Activated CD4-positive, alpha-beta T cell treated with anti-CD3 and anti-CD28 coated beads, Interleukin-2, amount 10 ng/mL, durations not matched to agents 24 days and 14 days (primary cell): ENCODE measurements at regions of chr12 and their contacts with region 1.

Region 1: DNA sequence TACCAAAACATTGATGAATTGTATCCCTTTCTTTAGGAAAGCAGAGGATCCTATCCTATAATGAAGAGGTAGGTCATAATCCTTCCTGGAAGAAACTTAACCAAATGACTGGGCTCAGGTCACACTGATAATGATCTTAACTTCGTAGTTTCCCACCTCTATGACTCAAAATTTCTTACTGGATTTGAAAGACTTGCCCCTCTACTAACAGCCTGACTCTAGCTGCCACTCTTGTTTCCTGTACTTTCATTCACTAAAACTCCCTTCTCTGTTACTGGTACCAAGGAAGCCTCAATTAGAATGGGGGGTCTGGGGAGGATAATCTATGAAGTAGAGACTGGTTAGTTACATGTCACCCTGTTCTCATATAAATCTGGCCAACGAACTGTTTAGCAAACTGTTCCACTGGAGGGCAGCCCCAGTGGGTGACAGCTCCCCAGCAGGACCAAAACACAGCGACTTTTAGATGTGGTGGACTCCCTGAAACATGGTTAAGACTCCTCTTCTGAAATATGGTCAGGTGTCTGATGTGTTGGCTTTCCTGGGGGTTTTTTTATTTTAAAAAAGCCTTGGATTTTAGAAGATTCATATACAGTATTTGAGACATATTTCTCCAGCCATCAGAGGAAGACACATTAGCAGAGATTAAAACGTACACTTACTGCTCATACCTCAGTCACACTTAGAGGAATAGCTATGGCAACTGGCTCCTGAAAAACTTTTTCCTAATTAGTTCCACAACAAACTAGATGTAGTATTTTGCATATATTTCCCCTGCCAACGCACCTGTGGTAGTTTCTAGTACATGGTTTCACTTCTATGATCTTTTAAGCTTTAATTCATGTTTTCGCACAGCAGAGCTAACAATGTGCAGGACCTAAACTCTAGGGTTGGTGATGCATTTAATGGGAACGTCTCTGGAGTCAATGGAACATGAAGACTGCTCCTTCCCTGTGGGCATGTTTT is 72.3 kb downstream of the ACADS start:
- DNase-seq: no peak
- H3K4me3 Mint-ChIP-seq: peak overlapping the region; percentile 29
- H3K27ac Mint-ChIP-seq: peak overlapping the region; percentile 84
- H3K4me1 Mint-ChIP-seq: peaks cover 34% of the 10 kb centered on the region
- H3K27me3 Mint-ChIP-seq: no peaks in the 10 kb centered on the region

Region 2: DNA sequence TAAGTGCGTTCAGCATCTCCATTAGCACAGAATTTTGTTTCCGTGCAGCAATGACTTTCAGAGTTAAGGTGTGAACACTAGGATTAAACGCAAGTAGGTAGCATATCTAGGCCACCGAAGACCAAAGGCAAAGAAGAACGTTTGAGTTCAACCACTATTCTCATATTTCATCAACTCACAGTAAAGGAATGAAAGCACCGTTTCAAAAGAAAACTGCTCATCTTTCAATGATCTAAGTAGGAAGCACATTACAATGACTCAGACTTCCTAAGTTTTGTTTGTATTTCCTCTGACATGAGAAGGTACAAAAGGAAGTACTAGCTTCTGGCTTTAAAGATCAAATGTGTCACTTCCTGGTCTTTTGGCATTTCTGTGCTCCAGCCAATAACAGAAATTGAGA is 14.8 kb before region 1 on chr12:
- intact Hi-C with region 1: loop called (anchors 2 kb)
- DNase-seq: no peak
- H3K4me3 Mint-ChIP-seq: no peak overlapping the region
- H3K27ac Mint-ChIP-seq: peak overlapping the region; percentile 75
- H3K4me1 Mint-ChIP-seq: peaks cover 15% of the 10 kb centered on the region
- H3K27me3 Mint-ChIP-seq: no peaks in the 10 kb centered on the region